ENCODE measurements at regions of chr16 and their contacts with region 1.

Region 1: DNA sequence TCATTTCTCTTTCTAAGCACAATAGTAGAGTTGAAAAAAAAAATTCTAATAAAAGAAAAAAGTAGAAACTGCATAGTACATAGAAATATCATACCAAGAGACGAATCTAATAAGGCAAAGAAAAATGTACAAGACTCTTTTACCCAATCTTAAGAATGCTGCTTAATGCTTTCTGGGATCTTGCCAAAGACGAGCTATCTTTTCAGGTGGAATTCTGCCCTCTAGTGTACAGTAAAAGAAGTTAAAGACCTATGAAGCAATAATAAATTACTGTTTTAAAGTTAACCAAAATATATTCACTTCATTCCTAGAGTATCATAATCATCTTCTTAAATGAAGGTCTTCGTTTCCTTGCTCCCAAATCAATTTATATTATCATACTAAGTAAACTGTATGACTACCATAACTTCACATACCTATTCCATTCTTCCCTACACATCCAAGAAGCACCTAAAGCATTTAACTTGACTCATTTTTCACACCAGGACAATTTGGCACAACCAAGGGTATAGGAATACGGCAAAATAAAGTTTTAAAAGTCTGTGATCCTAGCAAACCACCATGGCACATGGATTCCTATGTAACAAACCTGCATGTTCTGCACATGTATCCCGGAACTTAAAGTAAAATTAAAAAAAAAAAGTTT is 47.7 kb downstream of the CFDP1 start:
- DNase-seq: no peak
- H3K4me3 ChIP-seq: no peak overlapping the region
- H3K27ac ChIP-seq: peak overlapping the region in 4 of 59 donors; percentile 10 to 48 (median 12)
- H3K27me3 ChIP-seq: no peaks in the 10 kb centered on the region
- CTCF ChIP-seq: peak; percentile 70 to 95 (median 85)

Region 2: GRCh38 chr16:75198135-75198600 is 187.5 kb before region 1 on chr16:
- intact Hi-C with region 1: loop called (anchors 5 kb)
- DNase-seq: peak in 4 of 10 donors; percentile 19 to 38 (median 26)
- H3K4me3 ChIP-seq: no peak overlapping the region
- H3K27ac ChIP-seq: no peak overlapping the region
- H3K27me3 ChIP-seq: peaks cover 0 to 10% (median 0%) of the 10 kb centered on the region in 45 donors
- CTCF ChIP-seq: no peak

Region 3: GRCh38 chr16:75319513-75320411 is 65.9 kb before region 1 on chr16:
- intact Hi-C with region 1: loop called in 1 of 2 experiments (anchors 10 kb)
- DNase-seq: no peak
- H3K4me3 ChIP-seq: no peak overlapping the region
- H3K27ac ChIP-seq: peak overlapping the region in 54 of 59 donors; percentile 3 to 88 (median 66)
- H3K27me3 ChIP-seq: no peaks in the 10 kb centered on the region
- CTCF ChIP-seq: no peak

Region 4: GRCh38 chr16:75340741-75341491 is 44.7 kb before region 1 on chr16:
- intact Hi-C with region 1: no loop called
- DNase-seq: no peak
- H3K4me3 ChIP-seq: no peak overlapping the region
- H3K27ac ChIP-seq: no peak overlapping the region
- H3K27me3 ChIP-seq: no peaks in the 10 kb centered on the region
- CTCF ChIP-seq: no peak